ENCODE measurements at regions of chr7 and their contacts with region 1.

Region 1: GRCh38 chr7:128135515-128136214 is 104.4 kb upstream of the LRRC4 start:
- DNase-seq: peak; percentile 89
- CTCF ChIP-seq: peak; percentile 93

Region 2: GRCh38 chr7:128084896-128085608 is 50.6 kb before region 1 on chr7:
- CTCF ChIA-PET with region 1: interaction called, 11 read pairs
- POLR2A ChIA-PET with region 1: no interaction called
- DNase-seq: no peak
- CTCF ChIP-seq: no peak

Region 3: GRCh38 chr7:128104035-128104742 is 31.5 kb before region 1 on chr7:
- CTCF ChIA-PET with region 1: interaction called, 22 read pairs
- POLR2A ChIA-PET with region 1: interaction called, 3 read pairs
- DNase-seq: peak; percentile 56
- CTCF ChIP-seq: no peak

Region 4: GRCh38 chr7:128122576-128123290 is 12.9 kb before region 1 on chr7:
- CTCF ChIA-PET with region 1: interaction called, 15 read pairs
- POLR2A ChIA-PET with region 1: no interaction called
- DNase-seq: no peak
- CTCF ChIP-seq: no peak

Region 5: DNA sequence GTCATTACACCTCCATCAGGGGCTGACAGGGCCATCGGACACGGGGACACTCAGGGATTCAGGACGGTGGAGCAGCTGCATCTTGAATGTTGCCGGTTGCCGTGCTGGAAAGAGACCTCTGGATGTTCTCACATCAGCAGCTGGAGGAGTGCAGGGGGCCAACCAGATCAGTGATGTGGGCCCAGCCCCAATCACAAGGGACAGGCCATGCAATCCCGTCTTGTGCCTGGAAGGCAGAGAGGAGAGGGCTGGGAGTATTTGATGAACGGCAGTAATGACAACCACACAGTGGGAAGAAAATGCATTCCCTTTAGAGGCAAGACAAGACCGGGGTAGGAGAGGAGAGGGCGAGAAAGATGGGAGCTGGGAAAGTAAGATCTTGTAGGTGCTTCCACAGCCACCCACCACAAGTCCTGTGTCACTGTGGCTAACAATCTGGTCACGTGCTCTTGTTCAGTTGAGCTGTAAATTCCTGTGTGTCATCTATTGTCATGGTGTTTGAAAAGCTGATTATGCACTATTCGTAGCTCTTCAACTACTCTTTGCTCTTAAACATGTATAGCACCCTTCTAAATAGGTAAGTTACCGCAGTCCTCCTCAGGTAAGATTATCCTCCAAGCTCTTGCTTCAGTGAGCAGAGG is 19.6 kb after region 1 on chr7:
- CTCF ChIA-PET with region 1: interaction called, 15 read pairs
- POLR2A ChIA-PET with region 1: no interaction called
- DNase-seq: no peak
- CTCF ChIP-seq: no peak

Region 6: GRCh38 chr7:128164061-128164954 is 28.6 kb after region 1 on chr7:
- CTCF ChIA-PET with region 1: interaction called, 14 read pairs
- POLR2A ChIA-PET with region 1: no interaction called
- DNase-seq: no peak
- CTCF ChIP-seq: no peak